CD4-positive, alpha-beta memory T cell (primary cell): ENCODE measurements at regions of chr7 and their contacts with region 1.

Region 1: GRCh38 chr7:55365675-55366460 is 731 bp downstream of the LANCL2 start:
- DNase-seq: peak; percentile 95 to 100 (median 98)
- H3K4me3 ChIP-seq: peak overlapping the region; percentile 98 to 99
- H3K4me3 Mint-ChIP-seq: peak overlapping the region; percentile 90 to 96 (median 94)
- H3K27ac ChIP-seq: peak overlapping the region; percentile 98
- H3K27ac Mint-ChIP-seq: peak overlapping the region; percentile 98 to 99 (median 99)
- H3K4me1 ChIP-seq: peaks cover 27% of the 10 kb centered on the region
- H3K4me1 Mint-ChIP-seq: peaks cover 13 to 25% (median 21%) of the 10 kb centered on the region in 4 donors
- H3K27me3 ChIP-seq: no peaks in the 10 kb centered on the region
- H3K27me3 Mint-ChIP-seq: no peaks in the 10 kb centered on the region

Region 2: DNA sequence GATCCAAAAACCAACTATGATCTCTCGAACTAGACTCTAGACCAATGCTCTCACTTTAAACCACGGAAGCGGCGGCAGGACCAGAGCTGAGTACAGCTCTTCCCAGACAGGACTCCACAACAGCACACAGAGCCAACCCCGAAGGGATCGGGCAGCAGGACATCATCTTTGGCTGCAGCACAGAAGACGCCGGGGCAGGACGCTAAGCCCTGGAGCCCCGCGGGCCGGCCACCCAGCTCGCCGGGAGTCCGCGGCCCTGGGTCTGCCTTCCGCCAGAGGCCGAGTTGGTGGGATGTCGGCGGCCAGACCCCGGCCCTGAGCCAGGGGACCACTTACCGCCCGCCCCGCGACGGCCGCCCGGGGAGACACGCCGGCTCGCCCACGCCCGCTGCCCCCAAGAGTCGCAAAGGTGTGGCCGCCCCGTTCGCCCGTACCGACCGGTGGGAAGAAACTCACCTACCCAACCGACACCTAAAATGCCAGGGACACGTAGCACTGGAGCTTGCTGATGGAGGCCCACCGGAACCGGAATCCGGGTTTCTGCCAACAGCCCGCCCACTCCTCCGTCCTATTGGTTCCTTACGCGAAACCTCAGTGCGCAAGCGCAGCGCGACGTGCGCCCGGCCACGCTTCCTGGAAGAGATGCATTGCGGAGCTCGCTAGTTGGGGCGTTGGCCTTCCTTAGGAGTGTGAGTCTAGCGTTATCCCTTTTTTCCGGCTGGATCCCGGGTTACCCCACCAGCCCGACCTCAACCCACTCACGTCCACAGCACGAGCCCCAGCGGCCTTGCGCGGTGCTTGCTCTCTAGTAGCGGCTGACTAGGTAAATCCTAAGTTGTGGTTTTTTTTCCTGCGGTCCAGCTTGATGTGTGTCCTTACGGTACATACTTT is 606.9 kb before region 1 on chr7 and contains the start of gene SEC61G:
- CTCF ChIA-PET with region 1: interaction called, 3 read pairs
- POLR2A ChIA-PET with region 1: interaction called, 27 read pairs
- intact Hi-C with region 1: loop called (anchors 1 kb)
- DNase-seq: peak; percentile 95 to 96 (median 95)
- H3K4me3 ChIP-seq: peak within 1 kb of the TSS; percentile 62 to 97
- H3K4me3 Mint-ChIP-seq: peak within 1 kb of the TSS; percentile 99 to 100 (median 100)
- H3K27ac ChIP-seq: peak within 1 kb of the TSS; percentile 81
- H3K27ac Mint-ChIP-seq: peak within 1 kb of the TSS; percentile 95 to 99 (median 98)
- H3K4me1 ChIP-seq: peaks cover 22% of the 10 kb centered on the region
- H3K4me1 Mint-ChIP-seq: peaks cover 15 to 51% (median 32%) of the 10 kb centered on the region in 4 donors
- H3K27me3 ChIP-seq: no peaks in the 10 kb centered on the region
- H3K27me3 Mint-ChIP-seq: no peaks in the 10 kb centered on the region
- total RNA-seq, gene SEC61G: 67.0 to 73.9 TPM

Region 3: DNA sequence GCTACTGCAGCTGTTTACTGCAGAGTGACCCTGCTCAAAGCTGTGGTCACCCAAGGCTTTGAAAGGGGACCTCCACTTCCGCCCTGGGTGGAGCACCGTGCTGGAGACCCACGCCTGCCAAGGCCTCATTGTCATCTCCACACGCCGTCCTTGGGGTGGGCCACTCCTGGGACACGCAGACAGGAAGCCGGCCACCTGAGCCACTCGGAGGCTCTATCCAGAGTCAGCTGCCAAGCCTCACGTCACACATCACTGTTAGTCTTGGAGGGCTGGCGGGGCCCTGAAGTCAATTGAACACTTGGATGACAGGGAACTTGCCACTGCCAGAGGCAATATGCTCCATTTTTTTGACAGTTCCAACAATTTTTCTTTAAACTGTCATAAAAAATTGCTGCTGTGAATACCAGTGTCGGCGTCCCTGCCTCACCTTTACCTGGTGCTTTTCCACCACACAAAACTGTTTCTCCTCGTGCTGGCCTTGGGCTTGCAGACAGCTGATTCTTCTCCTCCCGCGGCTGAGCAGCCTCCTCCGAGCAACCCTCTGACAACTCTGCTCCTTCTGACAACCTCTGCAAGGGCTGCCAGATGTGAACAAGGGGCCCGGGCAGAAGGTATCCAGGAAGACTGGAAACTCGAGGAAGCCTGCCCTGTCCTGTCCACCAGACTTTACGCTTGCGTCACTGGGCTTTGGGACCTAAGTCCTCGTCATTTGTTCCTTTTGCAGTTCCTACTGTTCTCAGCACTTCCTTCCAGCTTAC is 265.1 kb before region 1 on chr7:
- CTCF ChIA-PET with region 1: no interaction called
- POLR2A ChIA-PET with region 1: no interaction called
- intact Hi-C with region 1: no loop called
- DNase-seq: no peak
- H3K4me3 ChIP-seq: no peak overlapping the region
- H3K4me3 Mint-ChIP-seq: no peak overlapping the region
- H3K27ac ChIP-seq: no peak overlapping the region
- H3K27ac Mint-ChIP-seq: peak overlapping the region in 1 of 7 donors; percentile 16
- H3K4me1 ChIP-seq: no peaks in the 10 kb centered on the region
- H3K4me1 Mint-ChIP-seq: peaks cover 0 to 1% (median 0%) of the 10 kb centered on the region in 4 donors
- H3K27me3 ChIP-seq: no peaks in the 10 kb centered on the region
- H3K27me3 Mint-ChIP-seq: peaks cover 5 to 30% of the 10 kb centered on the region in 2 donors

Region 4: GRCh38 chr7:55280031-55280454 is 85.8 kb before region 1 on chr7:
- CTCF ChIA-PET with region 1: no interaction called
- POLR2A ChIA-PET with region 1: interaction called, 5 read pairs
- intact Hi-C with region 1: loop called (anchors 10 kb)
- DNase-seq: peak; percentile 49 to 61 (median 55)
- H3K4me3 ChIP-seq: no peak overlapping the region
- H3K4me3 Mint-ChIP-seq: no peak overlapping the region
- H3K27ac ChIP-seq: no peak overlapping the region
- H3K27ac Mint-ChIP-seq: peak overlapping the region in 3 of 7 donors; percentile 79 to 83 (median 83)
- H3K4me1 ChIP-seq: no peaks in the 10 kb centered on the region
- H3K4me1 Mint-ChIP-seq: no peaks in the 10 kb centered on the region
- H3K27me3 ChIP-seq: no peaks in the 10 kb centered on the region
- H3K27me3 Mint-ChIP-seq: no peaks in the 10 kb centered on the region

Region 5: GRCh38 chr7:55469271-55469681 is 103.4 kb after region 1 on chr7:
- CTCF ChIA-PET with region 1: no interaction called
- POLR2A ChIA-PET with region 1: interaction called, 23 read pairs
- intact Hi-C with region 1: loop called (anchors 2 kb)
- DNase-seq: peak; percentile 60 to 82 (median 78)
- H3K4me3 ChIP-seq: no peak overlapping the region
- H3K4me3 Mint-ChIP-seq: peak overlapping the region in 7 of 8 donors; percentile 28 to 81 (median 72)
- H3K27ac ChIP-seq: peak overlapping the region; percentile 42
- H3K27ac Mint-ChIP-seq: peak overlapping the region; percentile 88 to 95 (median 94)
- H3K4me1 ChIP-seq: peaks cover 91% of the 10 kb centered on the region
- H3K4me1 Mint-ChIP-seq: peaks cover 49 to 84% (median 74%) of the 10 kb centered on the region in 4 donors
- H3K27me3 ChIP-seq: no peaks in the 10 kb centered on the region
- H3K27me3 Mint-ChIP-seq: no peaks in the 10 kb centered on the region

Region 6: GRCh38 chr7:55887821-55888247 is 522.0 kb after region 1 on chr7:
- CTCF ChIA-PET with region 1: no interaction called
- POLR2A ChIA-PET with region 1: no interaction called
- intact Hi-C with region 1: loop called (anchors 5 kb)
- DNase-seq: peak in 2 of 5 donors; percentile 8 to 17
- H3K4me3 ChIP-seq: no peak overlapping the region
- H3K4me3 Mint-ChIP-seq: peak overlapping the region; percentile 81 to 89 (median 87)
- H3K27ac ChIP-seq: no peak overlapping the region
- H3K27ac Mint-ChIP-seq: peak overlapping the region; percentile 74 to 95 (median 88)
- H3K4me1 ChIP-seq: peaks cover 7% of the 10 kb centered on the region
- H3K4me1 Mint-ChIP-seq: peaks cover 5 to 10% (median 6%) of the 10 kb centered on the region in 4 donors
- H3K27me3 ChIP-seq: no peaks in the 10 kb centered on the region
- H3K27me3 Mint-ChIP-seq: peaks cover 0 to 2% of the 10 kb centered on the region in 2 donors

Region 7: GRCh38 chr7:56063882-56064625 is 698.2 kb after region 1 on chr7 and contains the start of gene SUMF2:
- CTCF ChIA-PET with region 1: no interaction called
- POLR2A ChIA-PET with region 1: interaction called, 11 read pairs
- intact Hi-C with region 1: no loop called
- DNase-seq: peak; percentile 88 to 95 (median 92)
- H3K4me3 ChIP-seq: peak within 1 kb of the TSS; percentile 81 to 97
- H3K4me3 Mint-ChIP-seq: peak within 1 kb of the TSS; percentile 89 to 95 (median 94)
- H3K27ac ChIP-seq: peak within 1 kb of the TSS; percentile 72
- H3K27ac Mint-ChIP-seq: peak within 1 kb of the TSS; percentile 90 to 98 (median 95)
- H3K4me1 ChIP-seq: peaks cover 22% of the 10 kb centered on the region
- H3K4me1 Mint-ChIP-seq: peaks cover 21 to 38% (median 28%) of the 10 kb centered on the region in 4 donors
- H3K27me3 ChIP-seq: no peaks in the 10 kb centered on the region
- H3K27me3 Mint-ChIP-seq: no peaks in the 10 kb centered on the region
- total RNA-seq, gene SUMF2: 172 to 177 TPM